IMR-90 (cell line): ENCODE measurements at regions of chr1 and their contacts with region 1.

Region 1: GRCh38 chr1:119827010-119827409 is 15.8 kb upstream of the REG4 start:
- DNase-seq: no peak
- ATAC-seq: no peak
- H3K4me3 ChIP-seq: no peak overlapping the region
- H3K27ac ChIP-seq: no peak overlapping the region
- H3K4me1 ChIP-seq: peaks cover 8% of the 10 kb centered on the region; the same call in 1 of the 2 replicates
- H3K27me3 ChIP-seq: no peaks in the 10 kb centered on the region; the same call in 1 of the 2 replicates
- CTCF ChIP-seq: no peak
- POLR2A ChIP-seq: no peak
- RAD21 ChIP-seq: no peak

Region 2: GRCh38 chr1:119743781-119744597 is 83.0 kb before region 1 on chr1:
- CTCF ChIA-PET with region 1: no interaction called
- POLR2A ChIA-PET with region 1: no interaction called
- dilution Hi-C with region 1: no loop called
- in situ Hi-C with region 1: no loop called
- intact Hi-C with region 1: no loop called
- DNase-seq: peak; percentile 79
- ATAC-seq: peak; percentile 77
- H3K4me3 ChIP-seq: no peak overlapping the region
- H3K27ac ChIP-seq: no peak overlapping the region
- H3K4me1 ChIP-seq: peaks cover 13% of the 10 kb centered on the region
- H3K27me3 ChIP-seq: no peaks in the 10 kb centered on the region
- CTCF ChIP-seq: peak; percentile 88
- POLR2A ChIP-seq: no peak
- RAD21 ChIP-seq: peak; percentile 85

Region 3: GRCh38 chr1:119773711-119774241 is 53.2 kb before region 1 on chr1:
- CTCF ChIA-PET with region 1: no interaction called
- POLR2A ChIA-PET with region 1: no interaction called
- dilution Hi-C with region 1: no loop called
- in situ Hi-C with region 1: no loop called
- intact Hi-C with region 1: no loop called
- DNase-seq: peak; percentile 52
- ATAC-seq: peak; percentile 87
- H3K4me3 ChIP-seq: no peak overlapping the region
- H3K27ac ChIP-seq: no peak overlapping the region
- H3K4me1 ChIP-seq: peaks cover 5% of the 10 kb centered on the region
- H3K27me3 ChIP-seq: peaks cover 5% of the 10 kb centered on the region; the same call in 1 of the 2 replicates
- CTCF ChIP-seq: no peak
- POLR2A ChIP-seq: no peak
- RAD21 ChIP-seq: no peak

Region 4: GRCh38 chr1:119787776-119788175 is 39.2 kb before region 1 on chr1:
- CTCF ChIA-PET with region 1: no interaction called
- POLR2A ChIA-PET with region 1: no interaction called
- dilution Hi-C with region 1: no loop called
- in situ Hi-C with region 1: no loop called
- intact Hi-C with region 1: loop called (anchors 2 kb)
- DNase-seq: peak; percentile 63
- ATAC-seq: 0 out of 2 replicates have a peak, but pooled peaks have one; percentile 40
- H3K4me3 ChIP-seq: no peak overlapping the region
- H3K27ac ChIP-seq: no peak overlapping the region
- H3K4me1 ChIP-seq: peaks cover 13% of the 10 kb centered on the region
- H3K27me3 ChIP-seq: no peaks in the 10 kb centered on the region
- CTCF ChIP-seq: no peak
- POLR2A ChIP-seq: no peak
- RAD21 ChIP-seq: no peak

Region 5: DNA sequence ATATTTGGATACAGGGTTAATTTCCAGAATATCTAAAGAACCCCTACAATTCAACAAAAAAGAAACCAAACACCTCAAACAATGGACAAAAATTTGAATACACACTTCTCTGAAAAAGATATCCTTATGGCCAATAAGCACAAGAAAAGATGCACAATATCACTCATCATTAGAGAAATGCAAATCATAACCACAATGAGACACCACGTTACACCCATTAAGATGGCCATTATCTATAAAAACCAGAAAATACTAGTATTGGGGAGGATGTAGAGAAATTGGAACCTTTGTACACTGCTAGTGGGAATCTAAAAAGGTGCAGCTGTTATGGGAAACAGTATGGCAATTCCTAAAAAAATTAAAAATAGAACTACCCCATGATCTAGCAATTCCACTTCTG is 64.4 kb after region 1 on chr1:
- CTCF ChIA-PET with region 1: no interaction called
- POLR2A ChIA-PET with region 1: no interaction called
- dilution Hi-C with region 1: no loop called
- in situ Hi-C with region 1: no loop called
- intact Hi-C with region 1: loop called (anchors 2 kb)
- DNase-seq: no peak
- ATAC-seq: no peak
- H3K4me3 ChIP-seq: no peak overlapping the region
- H3K27ac ChIP-seq: no peak overlapping the region
- H3K4me1 ChIP-seq: no peaks in the 10 kb centered on the region
- H3K27me3 ChIP-seq: no peaks in the 10 kb centered on the region; the same call in 1 of the 2 replicates
- CTCF ChIP-seq: no peak
- POLR2A ChIP-seq: no peak
- RAD21 ChIP-seq: no peak